ENCODE measurements at regions of chr3 and their contacts with region 1.

Region 1: GRCh38 chr3:171838218-171838761 is 4.9 kb upstream of the TMEM212 start:
- H3K4me3 Mint-ChIP-seq: peak overlapping the region; percentile 45
- H3K27ac Mint-ChIP-seq: peak overlapping the region; percentile 67
- H3K4me1 Mint-ChIP-seq: peaks cover 35% of the 10 kb centered on the region
- H3K27me3 Mint-ChIP-seq: peaks cover 3% of the 10 kb centered on the region

Region 2: GRCh38 chr3:171646357-171647133 is 191.7 kb before region 1 on chr3:
- intact Hi-C with region 1: loop called (anchors 5 kb)
- H3K4me3 Mint-ChIP-seq: no peak overlapping the region
- H3K27ac Mint-ChIP-seq: no peak overlapping the region
- H3K4me1 Mint-ChIP-seq: peaks cover 24% of the 10 kb centered on the region
- H3K27me3 Mint-ChIP-seq: no peaks in the 10 kb centered on the region

Region 3: GRCh38 chr3:172249039-172249438 is 410.7 kb after region 1 on chr3:
- intact Hi-C with region 1: no loop called
- H3K4me3 Mint-ChIP-seq: no peak overlapping the region
- H3K27ac Mint-ChIP-seq: no peak overlapping the region
- H3K4me1 Mint-ChIP-seq: peaks cover 15% of the 10 kb centered on the region
- H3K27me3 Mint-ChIP-seq: no peaks in the 10 kb centered on the region

Region 4: GRCh38 chr3:172580680-172581401 is 742.6 kb after region 1 on chr3:
- intact Hi-C with region 1: no loop called
- H3K4me3 Mint-ChIP-seq: no peak overlapping the region
- H3K27ac Mint-ChIP-seq: peak overlapping the region; percentile 75
- H3K4me1 Mint-ChIP-seq: peaks cover 65% of the 10 kb centered on the region
- H3K27me3 Mint-ChIP-seq: peaks cover 2% of the 10 kb centered on the region